AG04450 (cell line): ENCODE measurements at regions of chr2 and their contacts with region 1.

Region 1: DNA sequence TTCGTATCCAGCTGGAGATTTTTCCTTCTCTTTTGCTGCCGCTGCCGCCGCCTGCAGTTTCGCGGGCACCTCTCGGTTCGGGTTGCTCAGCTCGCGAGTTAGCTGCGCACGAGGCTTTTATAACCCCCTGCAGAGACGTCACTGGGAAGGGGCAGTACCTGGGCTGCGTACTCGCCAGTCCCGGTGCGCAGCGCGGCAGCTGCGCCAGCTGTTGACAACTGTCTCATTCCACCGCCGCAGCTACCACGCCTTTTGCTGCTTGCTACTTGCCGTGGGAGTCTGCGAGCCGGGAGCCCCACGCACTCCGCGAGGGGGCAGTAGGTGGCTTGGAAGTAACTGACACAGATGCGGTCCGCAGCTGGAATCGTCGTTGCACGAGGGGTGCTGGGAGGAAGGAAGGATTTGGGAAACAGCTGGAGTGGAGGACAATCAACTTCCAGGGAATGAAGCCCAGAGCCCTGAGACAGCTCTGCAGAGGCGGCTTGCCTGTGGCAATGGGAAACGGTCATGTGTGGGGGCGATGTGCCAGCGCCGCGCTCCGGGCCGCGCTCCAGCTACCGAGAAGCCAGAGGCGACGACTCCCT is at the start of gene TACR1:
- DNase-seq: peak; percentile 56
- H3K4me3 ChIP-seq: peak within 1 kb of the TSS; percentile 62
- H3K27ac ChIP-seq: no peak within 1 kb of the TSS
- H3K27me3 ChIP-seq: peaks cover 21% of the 10 kb centered on the region
- CTCF ChIP-seq: peak; percentile 88
- polyA plus RNA-seq, gene TACR1: 0.14 and 0.30 TPM in 2 replicates

Region 2: DNA sequence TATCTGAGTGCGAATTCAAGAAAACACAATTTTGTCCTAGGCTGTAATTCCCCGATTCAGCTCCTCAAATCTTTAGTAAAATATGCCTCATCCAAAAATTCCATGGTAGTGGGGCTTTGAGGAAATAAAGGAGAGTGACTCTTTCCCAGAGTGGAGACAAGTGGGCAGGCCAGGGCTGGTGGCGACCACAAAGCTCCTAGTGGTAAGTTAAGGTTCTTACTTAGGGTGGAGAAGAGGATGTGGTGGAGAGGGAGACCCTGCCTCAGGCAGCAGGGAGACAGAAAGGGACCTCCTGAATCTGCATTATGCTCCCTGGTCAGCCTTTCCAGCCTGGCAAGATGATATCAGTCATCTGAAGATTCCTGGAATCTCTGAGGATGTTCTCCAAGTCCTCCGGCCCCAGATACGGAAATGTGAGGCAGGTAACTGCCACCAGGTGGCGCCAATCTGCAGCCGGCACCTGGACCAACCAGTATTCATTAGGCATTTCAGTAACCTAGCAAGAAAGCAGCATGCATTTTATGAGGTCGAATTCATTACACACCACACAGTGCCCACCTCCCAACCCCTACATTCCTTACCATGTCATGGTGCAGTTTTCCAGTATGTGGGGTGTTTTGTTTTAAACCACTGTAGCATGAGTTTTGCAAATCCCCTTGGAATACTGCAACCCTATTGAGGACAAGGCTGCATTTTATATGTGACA is 134.7 kb before region 1 on chr2:
- CTCF ChIA-PET with region 1: interaction called, 15 read pairs
- POLR2A ChIA-PET with region 1: no interaction called
- DNase-seq: no peak
- H3K4me3 ChIP-seq: no peak overlapping the region; the same call in 1 of the 2 replicates
- H3K27ac ChIP-seq: no peak overlapping the region
- H3K27me3 ChIP-seq: no peaks in the 10 kb centered on the region
- CTCF ChIP-seq: peak; percentile 84

Region 3: GRCh38 chr2:75186821-75187220 is 12.7 kb before region 1 on chr2:
- CTCF ChIA-PET with region 1: interaction called, 15 read pairs
- POLR2A ChIA-PET with region 1: no interaction called
- DNase-seq: no peak
- H3K4me3 ChIP-seq: no peak overlapping the region
- H3K27ac ChIP-seq: no peak overlapping the region
- H3K27me3 ChIP-seq: peaks cover 8% of the 10 kb centered on the region
- CTCF ChIP-seq: no peak

Region 4: DNA sequence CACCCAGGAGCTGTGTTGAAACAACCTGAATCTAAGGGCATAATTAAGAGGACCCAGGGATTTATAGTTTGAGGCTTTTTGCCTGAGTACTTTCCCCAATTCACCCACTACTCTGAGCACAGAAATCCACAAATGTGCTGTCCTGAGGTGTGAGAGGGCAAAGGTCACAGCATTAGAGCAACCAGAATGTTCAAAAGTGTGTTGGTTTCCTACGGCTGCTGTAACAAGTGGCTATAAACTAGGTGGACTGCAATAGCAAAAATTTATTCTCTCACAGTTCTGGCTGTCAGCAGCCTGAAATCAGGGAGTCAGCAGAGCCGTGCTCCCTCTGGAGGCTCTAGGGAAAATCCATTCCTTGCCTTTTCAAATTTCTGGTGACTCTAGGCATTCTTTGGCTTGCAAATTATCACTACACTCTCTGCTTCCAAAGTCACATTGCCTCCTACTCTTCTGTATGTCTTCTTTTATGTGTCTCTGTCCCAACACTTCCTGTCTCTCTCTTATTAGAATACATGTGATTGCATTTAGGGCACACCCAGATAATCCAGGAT is 91.2 kb after region 1 on chr2:
- CTCF ChIA-PET with region 1: interaction called, 26 read pairs
- POLR2A ChIA-PET with region 1: no interaction called
- DNase-seq: no peak
- H3K4me3 ChIP-seq: no peak overlapping the region
- H3K27ac ChIP-seq: no peak overlapping the region
- H3K27me3 ChIP-seq: no peaks in the 10 kb centered on the region
- CTCF ChIP-seq: peak; percentile 74

Region 5: DNA sequence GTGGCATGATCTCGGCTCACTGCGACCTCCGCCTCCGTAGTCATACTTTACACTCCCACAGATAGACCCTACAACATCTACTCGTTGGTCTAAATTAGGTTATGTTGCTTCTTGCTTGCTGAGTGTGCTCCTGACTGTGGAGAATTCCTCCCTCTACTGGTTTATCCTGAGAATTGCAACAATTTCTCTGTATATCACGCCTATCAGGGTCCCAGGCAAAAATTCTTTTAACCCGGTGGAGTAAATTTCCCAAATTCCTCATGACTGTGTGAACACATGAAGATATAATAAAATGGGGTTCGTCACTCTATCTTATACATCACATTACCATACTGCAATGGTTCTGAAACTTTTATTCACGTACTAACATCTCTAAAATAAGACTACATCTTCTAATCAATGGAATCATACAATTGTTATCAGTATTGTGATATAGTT is 204.5 kb after region 1 on chr2:
- CTCF ChIA-PET with region 1: interaction called, 40 read pairs
- POLR2A ChIA-PET with region 1: no interaction called
- DNase-seq: peak; percentile 13
- H3K4me3 ChIP-seq: no peak overlapping the region
- H3K27ac ChIP-seq: no peak overlapping the region
- H3K27me3 ChIP-seq: peaks cover 5% of the 10 kb centered on the region
- CTCF ChIP-seq: peak; percentile 88

Region 6: GRCh38 chr2:75627895-75628504 is 428.5 kb after region 1 on chr2:
- CTCF ChIA-PET with region 1: interaction called, 10 read pairs
- POLR2A ChIA-PET with region 1: no interaction called
- DNase-seq: no peak
- H3K4me3 ChIP-seq: no peak overlapping the region
- H3K27ac ChIP-seq: no peak overlapping the region
- H3K27me3 ChIP-seq: peaks cover 8% of the 10 kb centered on the region
- CTCF ChIP-seq: peak; percentile 99